ENCODE measurements at regions of chr16 and their contacts with region 1.

Region 1: GRCh38 chr16:87461466-87461991 is 31.3 kb downstream of the ZCCHC14 start:
- DNase-seq: peak; percentile 97
- ATAC-seq: peak; percentile 96
- H3K4me3 ChIP-seq: peak overlapping the region; percentile 36 to 62 (median 39); a peak in 5 of 6 replicates
- H3K27ac ChIP-seq: no peak overlapping the region
- H3K4me1 ChIP-seq: peaks cover 43% of the 10 kb centered on the region
- H3K27me3 ChIP-seq: no peaks in the 10 kb centered on the region
- CTCF ChIP-seq: peak; percentile 95
- EP300 ChIP-seq: peak in 1 of 2 experiments; percentile 30; a peak in 1 of 4 replicates
- POLR2A ChIP-seq: no peak; a peak in 1 of 4 replicates
- RAD21 ChIP-seq: peak; percentile 92

Region 2: GRCh38 chr16:87288753-87289362 is 172.7 kb before region 1 on chr16:
- CTCF ChIA-PET with region 1: no interaction called
- POLR2A ChIA-PET with region 1: no interaction called
- in situ Hi-C with region 1: no loop called
- intact Hi-C with region 1: no loop called
- DNase-seq: no peak
- ATAC-seq: no peak
- H3K4me3 ChIP-seq: no peak overlapping the region
- H3K27ac ChIP-seq: no peak overlapping the region
- H3K4me1 ChIP-seq: no peaks in the 10 kb centered on the region
- H3K27me3 ChIP-seq: no peaks in the 10 kb centered on the region
- CTCF ChIP-seq: no peak
- EP300 ChIP-seq: no peak
- POLR2A ChIP-seq: no peak
- RAD21 ChIP-seq: no peak

Region 3: GRCh38 chr16:87407511-87408112 is 53.9 kb before region 1 on chr16:
- CTCF ChIA-PET with region 1: no interaction called
- POLR2A ChIA-PET with region 1: no interaction called
- in situ Hi-C with region 1: no loop called
- intact Hi-C with region 1: no loop called
- DNase-seq: no peak
- ATAC-seq: no peak
- H3K4me3 ChIP-seq: no peak overlapping the region
- H3K27ac ChIP-seq: no peak overlapping the region
- H3K4me1 ChIP-seq: no peaks in the 10 kb centered on the region
- H3K27me3 ChIP-seq: no peaks in the 10 kb centered on the region
- CTCF ChIP-seq: no peak
- EP300 ChIP-seq: no peak
- POLR2A ChIP-seq: no peak
- RAD21 ChIP-seq: no peak

Region 4: GRCh38 chr16:87487361-87488001 is 26.0 kb after region 1 on chr16:
- CTCF ChIA-PET with region 1: no interaction called
- POLR2A ChIA-PET with region 1: interaction called, 11 read pairs
- in situ Hi-C with region 1: no loop called
- intact Hi-C with region 1: loop called (anchors 1 kb)
- DNase-seq: peak; percentile 97
- ATAC-seq: peak; percentile 87
- H3K4me3 ChIP-seq: peak overlapping the region; percentile 38 to 54 (median 50); a peak in 5 of 6 replicates
- H3K27ac ChIP-seq: peak overlapping the region; percentile 60
- H3K4me1 ChIP-seq: peaks cover 71% of the 10 kb centered on the region
- H3K27me3 ChIP-seq: no peaks in the 10 kb centered on the region
- CTCF ChIP-seq: peak; percentile 51
- EP300 ChIP-seq: peak in 1 of 2 experiments; percentile 18; a peak in 1 of 4 replicates
- POLR2A ChIP-seq: peak in 1 of 2 experiments; percentile 38; a peak in 1 of 4 replicates
- RAD21 ChIP-seq: 0 out of 2 replicates have a peak, but pooled peaks have one; percentile 8

Region 5: DNA sequence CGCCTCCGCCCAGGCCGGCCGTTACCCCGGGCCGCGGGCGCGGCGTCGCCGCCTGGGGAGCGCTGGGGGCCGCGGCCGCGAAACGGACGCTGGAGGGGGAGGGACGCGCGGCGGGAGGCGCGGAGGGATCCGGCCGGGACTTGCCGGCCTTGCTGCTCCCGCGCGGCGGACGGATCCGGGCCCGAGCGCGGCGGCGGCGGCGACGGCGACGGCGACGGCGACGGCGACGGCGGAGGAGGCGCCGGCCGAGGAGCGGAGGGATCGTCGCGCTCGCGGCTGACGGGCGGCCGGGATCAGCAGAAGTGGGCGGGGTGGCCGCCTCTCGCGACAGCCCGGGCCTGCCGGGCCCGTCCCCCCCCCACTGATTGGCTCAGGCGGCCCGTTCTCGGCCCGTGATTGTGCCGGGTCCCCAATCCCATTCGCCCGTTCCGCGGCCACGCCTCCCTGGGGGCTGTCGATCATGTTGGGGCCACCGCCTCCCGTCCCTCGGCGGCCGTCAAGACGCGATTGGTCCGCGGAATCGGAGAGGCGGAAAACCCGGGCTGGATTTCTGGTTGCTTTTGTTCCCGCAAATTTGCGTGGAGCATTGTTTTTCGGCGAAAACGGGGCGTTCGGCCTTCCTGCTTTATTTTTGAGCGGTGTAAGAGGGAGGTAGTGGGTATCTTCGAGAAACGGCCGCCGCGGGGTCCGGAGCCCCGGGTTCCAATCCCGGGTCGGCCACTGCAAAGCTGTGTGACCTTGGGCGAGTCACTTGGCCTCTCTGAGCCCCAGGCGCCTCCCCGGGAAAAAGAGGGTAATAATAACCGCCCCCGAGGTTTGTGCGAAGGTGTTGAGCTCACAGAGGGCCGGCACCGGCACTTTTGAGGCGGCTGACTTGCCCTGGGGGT is 31.4 kb after region 1 on chr16 and contains the start of gene ZCCHC14:
- CTCF ChIA-PET with region 1: no interaction called
- POLR2A ChIA-PET with region 1: interaction called, 11 read pairs
- in situ Hi-C with region 1: no loop called
- intact Hi-C with region 1: no loop called
- DNase-seq: peak; percentile 97
- ATAC-seq: peak; percentile 75
- H3K4me3 ChIP-seq: peak within 1 kb of the TSS; percentile 67 to 93 (median 85)
- H3K27ac ChIP-seq: peak within 1 kb of the TSS; percentile 63
- H3K4me1 ChIP-seq: peaks cover 70% of the 10 kb centered on the region
- H3K27me3 ChIP-seq: no peaks in the 10 kb centered on the region; a peak in 1 of 5 replicates
- CTCF ChIP-seq: no peak
- EP300 ChIP-seq: peak; percentile 8 to 46; a peak in 2 of 4 replicates
- POLR2A ChIP-seq: peak; percentile 40 to 91; a peak in 3 of 4 replicates
- RAD21 ChIP-seq: peak; percentile 86
- total RNA-seq, gene ZCCHC14: 12.5 and 20.4 TPM in 2 replicates

Region 6: GRCh38 chr16:87535855-87536794 is 74.6 kb after region 1 on chr16:
- CTCF ChIA-PET with region 1: no interaction called
- POLR2A ChIA-PET with region 1: interaction called, 9 read pairs
- in situ Hi-C with region 1: no loop called
- intact Hi-C with region 1: loop called (anchors 1 kb)
- DNase-seq: peak; percentile 87
- ATAC-seq: peak; percentile 86
- H3K4me3 ChIP-seq: peak overlapping the region; percentile 40 to 63 (median 50)
- H3K27ac ChIP-seq: peak overlapping the region; percentile 78
- H3K4me1 ChIP-seq: peaks cover 75% of the 10 kb centered on the region
- H3K27me3 ChIP-seq: peaks cover 7 to 18% of the 10 kb centered on the region in 2 experiments
- CTCF ChIP-seq: 0 out of 2 replicates have a peak, but pooled peaks have one; percentile 16
- EP300 ChIP-seq: peak in 1 of 2 experiments; percentile 28; a peak in 1 of 4 replicates
- POLR2A ChIP-seq: peak in 1 of 2 experiments; percentile 23; a peak in 1 of 4 replicates
- RAD21 ChIP-seq: peak; percentile 15; the same call in 1 of the 2 replicates

Region 7: DNA sequence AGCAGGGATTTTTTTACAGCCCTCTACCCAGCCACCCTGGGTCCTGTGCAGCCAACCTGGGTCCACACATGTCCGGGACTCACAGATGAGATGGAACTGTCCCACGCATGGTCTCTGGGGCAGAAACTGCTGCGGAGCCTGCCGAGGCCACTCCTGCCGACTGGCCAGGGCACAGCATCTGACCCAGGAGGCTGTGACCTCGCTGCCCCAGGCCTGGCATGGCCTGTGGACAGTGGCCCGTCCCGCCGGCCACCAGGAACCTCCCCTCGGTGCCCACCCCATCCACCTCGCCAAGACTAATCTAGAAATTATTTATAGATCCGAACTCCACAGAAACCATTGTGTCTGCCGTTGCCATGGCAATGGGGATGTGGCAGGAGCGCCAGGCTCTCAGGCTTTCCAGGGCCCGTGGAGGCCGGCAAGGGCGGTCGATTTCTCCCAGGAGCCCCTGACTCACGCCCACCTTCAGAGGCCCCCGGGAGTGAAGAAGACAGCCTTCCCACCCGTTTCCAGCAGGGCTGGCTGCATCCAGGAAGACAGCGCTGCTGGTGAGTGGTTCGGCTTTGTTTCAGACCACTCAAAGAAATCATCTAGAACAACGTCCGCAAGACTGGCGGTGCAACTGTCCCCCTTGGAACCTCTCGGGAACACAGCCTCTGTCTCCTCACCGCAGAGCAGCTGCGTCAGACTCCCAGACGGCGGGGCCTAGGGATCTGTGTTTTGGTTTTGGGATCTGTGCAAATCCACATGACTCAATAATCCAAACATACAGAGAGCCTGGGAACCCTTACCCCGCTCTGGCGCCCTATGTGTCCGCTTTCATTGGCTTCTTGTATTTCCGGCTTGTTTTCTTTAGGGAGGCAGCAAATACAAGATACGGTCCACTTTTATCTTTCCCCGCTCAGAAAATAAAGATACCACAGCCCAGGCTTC is 79.7 kb after region 1 on chr16:
- CTCF ChIA-PET with region 1: interaction called, 17 read pairs
- POLR2A ChIA-PET with region 1: interaction called, 9 read pairs
- in situ Hi-C with region 1: no loop called
- intact Hi-C with region 1: loop called (anchors 1 kb)
- DNase-seq: no peak
- ATAC-seq: no peak
- H3K4me3 ChIP-seq: no peak overlapping the region; a peak in 1 of 6 replicates
- H3K27ac ChIP-seq: no peak overlapping the region
- H3K4me1 ChIP-seq: peaks cover 79% of the 10 kb centered on the region
- H3K27me3 ChIP-seq: peaks cover 7 to 59% of the 10 kb centered on the region in 2 experiments
- CTCF ChIP-seq: no peak
- EP300 ChIP-seq: no peak
- POLR2A ChIP-seq: no peak
- RAD21 ChIP-seq: no peak

Region 8: GRCh38 chr16:87571136-87571867 is 109.8 kb after region 1 on chr16:
- CTCF ChIA-PET with region 1: interaction called, 15 read pairs
- POLR2A ChIA-PET with region 1: interaction called, 4 read pairs
- in situ Hi-C with region 1: no loop called
- intact Hi-C with region 1: loop called (anchors 1 kb)
- DNase-seq: peak; percentile 59
- ATAC-seq: peak; percentile 89
- H3K4me3 ChIP-seq: peak overlapping the region in 1 of 3 experiments; percentile 29; a peak in 1 of 6 replicates
- H3K27ac ChIP-seq: no peak overlapping the region
- H3K4me1 ChIP-seq: peaks cover 25% of the 10 kb centered on the region
- H3K27me3 ChIP-seq: peaks cover 3 to 45% of the 10 kb centered on the region in 2 experiments; a peak in 3 of 5 replicates
- CTCF ChIP-seq: peak; percentile 66
- EP300 ChIP-seq: no peak
- POLR2A ChIP-seq: no peak
- RAD21 ChIP-seq: peak; percentile 62

Region 9: GRCh38 chr16:87636072-87636684 is 174.6 kb after region 1 on chr16:
- CTCF ChIA-PET with region 1: interaction called, 14 read pairs
- POLR2A ChIA-PET with region 1: no interaction called
- in situ Hi-C with region 1: no loop called
- intact Hi-C with region 1: loop called (anchors 5 kb)
- DNase-seq: peak; percentile 75
- ATAC-seq: peak; percentile 92
- H3K4me3 ChIP-seq: peak overlapping the region; percentile 19 to 62 (median 20); a peak in 1 of 6 replicates
- H3K27ac ChIP-seq: no peak overlapping the region
- H3K4me1 ChIP-seq: peaks cover 11% of the 10 kb centered on the region; the same call in 1 of the 2 replicates
- H3K27me3 ChIP-seq: peaks cover 27 to 92% of the 10 kb centered on the region in 2 experiments; a peak in 4 of 5 replicates
- CTCF ChIP-seq: peak; percentile 93
- EP300 ChIP-seq: no peak
- POLR2A ChIP-seq: no peak
- RAD21 ChIP-seq: peak; percentile 91